Activated T-helper 2 cell treated with anti-CD3 and anti-CD28 coated beads, Interferon-gamma antibody, Interleukin-2, Interleukin-4, amounts not matched to agents 10 μg/mL and 5 μg/mL and 100 μg/mL, durations not matched to agents 14 hours and 24 hours and 36 hours (primary cell): ENCODE measurements at regions of chr4 and their contacts with region 1.

Region 1: GRCh38 chr4:15231265-15232091 is 196.4 kb upstream of the C1QTNF7 start:
- DNase-seq: peak; percentile 61
- H3K4me3 Mint-ChIP-seq: no peak overlapping the region
- H3K27ac Mint-ChIP-seq: no peak overlapping the region
- H3K4me1 Mint-ChIP-seq: peaks cover 30% of the 10 kb centered on the region
- H3K27me3 Mint-ChIP-seq: peaks cover 2% of the 10 kb centered on the region

Region 2: GRCh38 chr4:15173251-15173650 is 58.2 kb before region 1 on chr4:
- intact Hi-C with region 1: no loop called
- DNase-seq: no peak
- H3K4me3 Mint-ChIP-seq: no peak overlapping the region
- H3K27ac Mint-ChIP-seq: no peak overlapping the region
- H3K4me1 Mint-ChIP-seq: no peaks in the 10 kb centered on the region
- H3K27me3 Mint-ChIP-seq: peaks cover 13% of the 10 kb centered on the region

Region 3: GRCh38 chr4:15396157-15396800 is 164.8 kb after region 1 on chr4:
- intact Hi-C with region 1: loop called (anchors 2 kb)
- DNase-seq: peak; percentile 46
- H3K4me3 Mint-ChIP-seq: no peak overlapping the region
- H3K27ac Mint-ChIP-seq: no peak overlapping the region
- H3K4me1 Mint-ChIP-seq: peaks cover 16% of the 10 kb centered on the region
- H3K27me3 Mint-ChIP-seq: no peaks in the 10 kb centered on the region

Region 4: GRCh38 chr4:15457406-15458201 is 226.1 kb after region 1 on chr4:
- intact Hi-C with region 1: loop called (anchors 1 kb)
- DNase-seq: no peak
- H3K4me3 Mint-ChIP-seq: no peak overlapping the region
- H3K27ac Mint-ChIP-seq: no peak overlapping the region
- H3K4me1 Mint-ChIP-seq: no peaks in the 10 kb centered on the region
- H3K27me3 Mint-ChIP-seq: peaks cover 25% of the 10 kb centered on the region

Region 5: DNA sequence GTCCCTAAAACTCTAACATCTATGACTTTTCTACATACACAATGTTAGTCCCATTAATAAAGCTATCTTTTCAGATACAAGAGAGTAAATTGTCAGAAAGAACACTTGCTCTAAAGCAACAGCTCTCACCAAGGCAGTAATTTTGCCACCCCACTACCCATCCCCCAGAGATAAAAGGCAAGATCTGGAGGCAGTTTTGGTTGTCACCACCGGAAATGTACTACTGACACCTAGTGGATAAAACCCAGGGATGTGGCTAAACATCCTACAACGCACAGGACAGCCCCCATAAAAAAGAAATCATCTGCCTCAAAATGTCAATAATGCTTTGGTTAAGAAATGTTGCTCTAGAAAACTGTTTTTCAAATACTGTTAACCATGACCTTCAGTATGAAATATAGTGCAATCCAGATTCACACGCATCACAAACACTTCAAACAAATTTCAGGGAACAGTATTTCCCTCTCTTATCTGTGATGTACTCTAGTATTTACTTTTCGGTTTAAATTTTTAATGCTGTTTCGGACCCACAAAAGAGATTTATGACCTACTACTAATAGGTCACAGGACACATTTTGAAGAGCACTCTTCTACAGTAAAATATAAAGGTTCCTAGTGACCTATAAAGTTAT is 418.6 kb after region 1 on chr4:
- intact Hi-C with region 1: loop called (anchors 2 kb)
- DNase-seq: peak; percentile 56
- H3K4me3 Mint-ChIP-seq: peak overlapping the region; percentile 3
- H3K27ac Mint-ChIP-seq: peak overlapping the region; percentile 57
- H3K4me1 Mint-ChIP-seq: peaks cover 50% of the 10 kb centered on the region
- H3K27me3 Mint-ChIP-seq: no peaks in the 10 kb centered on the region

Region 6: DNA sequence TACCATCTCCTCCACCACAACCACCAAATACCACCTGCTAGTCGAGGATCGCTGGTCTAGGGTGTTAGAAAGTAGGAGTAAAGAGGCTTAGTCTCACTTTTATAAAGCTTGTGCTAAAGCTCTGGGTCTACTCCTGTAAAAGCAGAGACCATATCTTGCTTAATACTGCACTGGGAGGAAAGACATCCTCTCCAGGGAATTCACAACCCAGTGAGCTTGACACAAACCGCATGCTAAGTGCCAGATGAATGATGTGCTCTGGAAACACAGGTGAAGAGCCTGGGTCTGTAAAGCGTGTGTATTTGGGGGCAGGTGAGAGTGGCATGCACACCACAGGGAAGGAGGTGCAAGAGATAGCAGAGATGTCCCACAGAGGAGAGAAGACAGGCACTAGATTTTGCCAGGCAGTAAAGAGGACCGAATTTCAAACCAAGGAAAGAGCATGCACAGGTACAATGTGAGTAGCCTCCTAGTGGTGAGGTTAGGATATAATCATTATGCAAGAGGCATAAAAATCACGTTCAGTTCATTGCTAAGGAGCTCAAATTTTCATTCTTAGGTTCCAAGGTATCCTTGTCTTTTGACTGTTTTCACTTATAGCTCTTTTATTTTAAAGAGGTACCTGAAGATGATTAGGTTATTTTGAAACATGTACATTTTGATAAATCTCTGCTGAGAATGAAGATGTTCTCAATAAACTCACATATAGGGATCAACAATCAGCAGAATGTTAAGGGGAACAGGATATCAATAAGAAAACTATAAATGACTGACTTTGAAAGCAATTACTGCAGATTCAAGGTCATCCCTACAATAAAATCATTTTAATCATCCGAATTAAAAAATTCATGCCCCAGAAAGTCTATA is 974.1 kb after region 1 on chr4:
- intact Hi-C with region 1: no loop called
- DNase-seq: no peak
- H3K4me3 Mint-ChIP-seq: no peak overlapping the region
- H3K27ac Mint-ChIP-seq: no peak overlapping the region
- H3K4me1 Mint-ChIP-seq: peaks cover 34% of the 10 kb centered on the region
- H3K27me3 Mint-ChIP-seq: no peaks in the 10 kb centered on the region